Activated CD4-positive, alpha-beta T cell treated with anti-CD3 and anti-CD28 coated beads, Interleukin-2, amount 10 ng/mL, durations not matched to agents 24 days and 14 days (primary cell): ENCODE measurements at regions of chr1 and their contacts with region 1.

Region 1: DNA sequence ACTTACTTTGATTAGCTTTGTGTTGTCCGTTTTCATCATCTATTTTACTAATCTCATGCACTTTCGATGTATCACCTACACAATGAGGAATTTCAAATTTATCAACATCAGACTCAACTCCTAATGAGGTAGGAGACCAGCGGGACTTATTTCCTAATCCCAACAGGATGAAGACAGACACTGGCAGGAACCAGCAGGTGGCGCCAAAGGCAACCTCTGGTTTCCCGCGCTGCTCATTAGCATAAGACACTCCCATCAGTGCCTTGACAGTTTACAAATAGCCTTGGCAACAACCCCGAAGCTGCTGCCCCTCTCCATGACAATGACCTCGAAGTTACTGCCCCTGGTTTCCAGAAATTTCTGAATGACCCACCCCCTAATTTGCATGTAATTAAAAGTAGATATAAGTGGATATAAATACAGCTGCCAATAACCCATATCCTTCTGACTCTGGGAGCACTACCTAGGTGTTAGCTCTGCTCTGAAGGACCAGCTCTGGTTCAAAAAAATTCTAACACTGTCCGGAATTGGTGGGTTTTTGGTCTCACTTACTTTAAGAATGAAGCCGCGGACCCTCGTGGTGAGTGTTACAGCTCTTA is 974.8 kb downstream of the ADGRL2 start:
- DNase-seq: peak; percentile 71
- H3K4me3 Mint-ChIP-seq: no peak overlapping the region
- H3K27ac Mint-ChIP-seq: no peak overlapping the region
- H3K4me1 Mint-ChIP-seq: peaks cover 3% of the 10 kb centered on the region
- H3K27me3 Mint-ChIP-seq: no peaks in the 10 kb centered on the region

Region 2: GRCh38 chr1:82762829-82763532 is 12.5 kb before region 1 on chr1:
- intact Hi-C with region 1: no loop called
- DNase-seq: no peak
- H3K4me3 Mint-ChIP-seq: no peak overlapping the region
- H3K27ac Mint-ChIP-seq: no peak overlapping the region
- H3K4me1 Mint-ChIP-seq: no peaks in the 10 kb centered on the region
- H3K27me3 Mint-ChIP-seq: peaks cover 2% of the 10 kb centered on the region

Region 3: GRCh38 chr1:82801176-82801575 is 25.7 kb after region 1 on chr1:
- intact Hi-C with region 1: no loop called
- DNase-seq: no peak
- H3K4me3 Mint-ChIP-seq: no peak overlapping the region
- H3K27ac Mint-ChIP-seq: no peak overlapping the region
- H3K4me1 Mint-ChIP-seq: no peaks in the 10 kb centered on the region
- H3K27me3 Mint-ChIP-seq: no peaks in the 10 kb centered on the region

Region 4: GRCh38 chr1:82813386-82813785 is 37.9 kb after region 1 on chr1:
- intact Hi-C with region 1: loop called (anchors 1 kb)
- DNase-seq: no peak
- H3K4me3 Mint-ChIP-seq: no peak overlapping the region
- H3K27ac Mint-ChIP-seq: no peak overlapping the region
- H3K4me1 Mint-ChIP-seq: no peaks in the 10 kb centered on the region
- H3K27me3 Mint-ChIP-seq: peaks cover 2% of the 10 kb centered on the region

Region 5: GRCh38 chr1:83531521-83532309 is 756.2 kb after region 1 on chr1:
- intact Hi-C with region 1: no loop called
- DNase-seq: no peak
- H3K4me3 Mint-ChIP-seq: no peak overlapping the region
- H3K27ac Mint-ChIP-seq: no peak overlapping the region
- H3K4me1 Mint-ChIP-seq: no peaks in the 10 kb centered on the region
- H3K27me3 Mint-ChIP-seq: no peaks in the 10 kb centered on the region

Region 6: GRCh38 chr1:83860490-83861221 is 1085.2 kb after region 1 on chr1:
- intact Hi-C with region 1: loop called (anchors 5 kb)
- DNase-seq: peak; percentile 92
- H3K4me3 Mint-ChIP-seq: peak overlapping the region; percentile 71
- H3K27ac Mint-ChIP-seq: peak overlapping the region; percentile 1
- H3K4me1 Mint-ChIP-seq: peaks cover 7% of the 10 kb centered on the region
- H3K27me3 Mint-ChIP-seq: peaks cover 7% of the 10 kb centered on the region